ENCODE measurements at regions of chr1 and their contacts with region 1.

Region 1: DNA sequence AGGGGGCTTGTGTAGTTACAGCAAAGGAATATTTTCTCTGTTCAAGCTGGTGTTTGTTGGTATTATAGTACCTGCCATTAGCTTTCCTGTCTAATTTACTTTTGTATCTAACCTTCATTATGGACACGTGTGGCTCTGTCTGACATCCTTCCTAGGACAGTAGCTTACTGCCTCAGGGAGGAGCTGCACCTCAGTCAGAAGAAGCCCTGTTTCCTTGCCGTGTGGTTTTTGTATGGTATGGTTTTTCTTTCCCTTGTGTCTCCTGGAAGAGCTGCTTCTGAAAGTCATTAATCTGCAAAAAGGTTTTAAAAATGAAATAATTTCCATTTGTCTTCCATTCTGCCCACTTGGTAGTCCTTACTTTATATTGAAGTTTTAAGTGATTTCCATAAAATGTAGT is 17.4 kb upstream of the CRB1 start:
- DNase-seq: no peak
- ATAC-seq: no peak
- H3K4me3 ChIP-seq: no peak overlapping the region
- H3K27ac ChIP-seq: no peak overlapping the region
- H3K4me1 ChIP-seq: no peaks in the 10 kb centered on the region
- H3K27me3 ChIP-seq: no peaks in the 10 kb centered on the region
- CTCF ChIP-seq: no peak
- EP300 ChIP-seq: no peak
- POLR2A ChIP-seq: no peak
- RAD21 ChIP-seq: no peak

Region 2: GRCh38 chr1:197302775-197303174 is 52.2 kb after region 1 on chr1:
- CTCF ChIA-PET with region 1: no interaction called
- POLR2A ChIA-PET with region 1: no interaction called
- RAD21 ChIA-PET with region 1: no interaction called
- SMC1A ChIA-PET with region 1: no interaction called
- in situ Hi-C with region 1: no loop called
- intact Hi-C with region 1: loop called (anchors 2 kb)
- DNase-seq: no peak
- ATAC-seq: no peak
- H3K4me3 ChIP-seq: no peak overlapping the region
- H3K27ac ChIP-seq: no peak overlapping the region
- H3K4me1 ChIP-seq: no peaks in the 10 kb centered on the region
- H3K27me3 ChIP-seq: no peaks in the 10 kb centered on the region
- CTCF ChIP-seq: no peak
- EP300 ChIP-seq: no peak
- POLR2A ChIP-seq: no peak
- RAD21 ChIP-seq: no peak

Measured in GM12878 (cell line).